B cell (primary cell): ENCODE measurements at regions of chrX and their contacts with region 1.

Region 1: GRCh38 chrX:153927922-153928760 is 2.1 kb upstream of the ARHGAP4 start:
- DNase-seq: peak; percentile 95
- ATAC-seq: peak; percentile 62
- H3K4me3 ChIP-seq: peak overlapping the region; percentile 73 to 88 (median 78)
- H3K4me3 Mint-ChIP-seq: peak overlapping the region; percentile 92
- H3K27ac ChIP-seq: peak overlapping the region; percentile 96 to 98
- H3K27ac Mint-ChIP-seq: peak overlapping the region; percentile 98
- H3K4me1 ChIP-seq: peaks cover 41 to 45% of the 10 kb centered on the region in 2 donors
- H3K4me1 Mint-ChIP-seq: peaks cover 35% of the 10 kb centered on the region
- H3K27me3 ChIP-seq: no peaks in the 10 kb centered on the region
- H3K27me3 Mint-ChIP-seq: no peaks in the 10 kb centered on the region
- CTCF ChIP-seq: no peak

Region 2: DNA sequence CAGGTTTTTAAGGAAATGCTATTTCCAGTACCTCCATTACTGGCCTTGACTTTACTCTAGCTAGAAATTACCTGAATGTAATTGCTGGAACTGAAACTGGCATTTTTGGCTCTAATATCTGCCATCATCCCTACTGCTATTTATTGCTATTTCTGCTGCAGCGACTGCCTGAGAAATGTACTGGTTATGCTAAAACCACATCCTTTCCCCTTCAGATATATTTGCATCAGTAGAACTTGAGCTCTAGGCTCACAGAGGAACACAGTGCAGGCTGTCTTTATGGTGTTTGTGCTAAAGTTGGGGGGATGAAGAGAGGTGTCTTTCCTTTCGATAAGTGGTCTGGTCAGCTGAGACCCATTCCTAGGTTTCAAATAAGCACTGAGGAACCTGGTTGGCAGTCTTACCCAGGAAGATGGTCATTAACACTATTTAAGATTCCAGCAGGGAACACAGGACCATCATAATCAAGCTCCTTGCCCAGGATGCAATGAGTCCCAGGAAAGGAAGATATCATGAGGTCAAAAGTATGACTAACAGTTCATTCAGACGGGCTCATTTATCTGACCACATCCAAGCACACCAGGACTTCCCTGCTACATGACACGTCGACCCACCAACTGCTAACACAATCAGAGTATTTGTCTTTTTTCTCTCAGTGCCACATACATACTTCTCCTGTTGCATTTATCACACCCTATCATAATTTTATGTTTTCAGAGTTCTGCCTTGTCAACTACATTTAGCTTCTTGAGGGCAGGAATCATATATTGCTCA is 1614.4 kb before region 1 on chrX:
- CTCF ChIA-PET with region 1: no interaction called
- POLR2A ChIA-PET with region 1: no interaction called
- intact Hi-C with region 1: no loop called
- DNase-seq: no peak
- ATAC-seq: no peak
- H3K4me3 ChIP-seq: no peak overlapping the region
- H3K4me3 Mint-ChIP-seq: no peak overlapping the region
- H3K27ac ChIP-seq: no peak overlapping the region
- H3K27ac Mint-ChIP-seq: no peak overlapping the region
- H3K4me1 ChIP-seq: no peaks in the 10 kb centered on the region
- H3K4me1 Mint-ChIP-seq: no peaks in the 10 kb centered on the region
- H3K27me3 ChIP-seq: no peaks in the 10 kb centered on the region
- H3K27me3 Mint-ChIP-seq: no peaks in the 10 kb centered on the region
- CTCF ChIP-seq: no peak

Region 3: GRCh38 chrX:153693191-153694086 is 234.7 kb before region 1 on chrX:
- CTCF ChIA-PET with region 1: no interaction called
- POLR2A ChIA-PET with region 1: no interaction called
- intact Hi-C with region 1: no loop called
- DNase-seq: no peak
- ATAC-seq: no peak
- H3K4me3 ChIP-seq: no peak overlapping the region
- H3K4me3 Mint-ChIP-seq: no peak overlapping the region
- H3K27ac ChIP-seq: no peak overlapping the region
- H3K27ac Mint-ChIP-seq: no peak overlapping the region
- H3K4me1 ChIP-seq: no peaks in the 10 kb centered on the region
- H3K4me1 Mint-ChIP-seq: no peaks in the 10 kb centered on the region
- H3K27me3 ChIP-seq: peaks cover 0 to 11% (median 0%) of the 10 kb centered on the region in 4 experiments
- H3K27me3 Mint-ChIP-seq: no peaks in the 10 kb centered on the region
- CTCF ChIP-seq: no peak

Region 4: GRCh38 chrX:153724252-153725040 is 203.7 kb before region 1 on chrX and contains the starts of genes ABCD1 and BCAP31:
- CTCF ChIA-PET with region 1: no interaction called
- POLR2A ChIA-PET with region 1: interaction called, 6 read pairs
- intact Hi-C with region 1: loop called (anchors 1 kb)
- DNase-seq: peak; percentile 93
- ATAC-seq: peak; percentile 72
- H3K4me3 ChIP-seq: peak within 1 kb of the TSS in 4 of 5 experiments; percentile 58 to 74 (median 64)
- H3K4me3 Mint-ChIP-seq: peak within 1 kb of the TSS; percentile 88
- H3K27ac ChIP-seq: peak within 1 kb of the TSS; percentile 81 to 86
- H3K27ac Mint-ChIP-seq: peak within 1 kb of the TSS; percentile 92
- H3K4me1 ChIP-seq: peaks cover 37 to 42% of the 10 kb centered on the region in 2 donors
- H3K4me1 Mint-ChIP-seq: peaks cover 40% of the 10 kb centered on the region
- H3K27me3 ChIP-seq: no peaks in the 10 kb centered on the region
- H3K27me3 Mint-ChIP-seq: no peaks in the 10 kb centered on the region
- CTCF ChIP-seq: no peak
- total RNA-seq, gene ABCD1: 9.7 and 10.9 TPM in 2 replicates
- total RNA-seq, gene BCAP31: 112 and 117 TPM in 2 replicates

Region 5: GRCh38 chrX:153794018-153794896 is 133.9 kb before region 1 on chrX and contains the starts of genes IDH3G and SSR4:
- CTCF ChIA-PET with region 1: interaction called, 9 read pairs
- POLR2A ChIA-PET with region 1: interaction called, 11 read pairs
- intact Hi-C with region 1: loop called (anchors 1 kb)
- DNase-seq: peak; percentile 96
- ATAC-seq: peak; percentile 92
- H3K4me3 ChIP-seq: peak within 1 kb of the TSS; percentile 43 to 80 (median 80)
- H3K4me3 Mint-ChIP-seq: peak within 1 kb of the TSS; percentile 93
- H3K27ac ChIP-seq: peak within 1 kb of the TSS; percentile 87 to 90
- H3K27ac Mint-ChIP-seq: peak within 1 kb of the TSS; percentile 97
- H3K4me1 ChIP-seq: peaks cover 16 to 24% of the 10 kb centered on the region in 2 donors
- H3K4me1 Mint-ChIP-seq: peaks cover 30% of the 10 kb centered on the region
- H3K27me3 ChIP-seq: no peaks in the 10 kb centered on the region
- H3K27me3 Mint-ChIP-seq: no peaks in the 10 kb centered on the region
- CTCF ChIP-seq: no peak
- total RNA-seq, gene IDH3G: 58.5 and 62.8 TPM in 2 replicates
- total RNA-seq, gene SSR4: 119 and 134 TPM in 2 replicates

Region 6: GRCh38 chrX:153885968-153886903 is 41.9 kb before region 1 on chrX and contains the start of gene L1CAM:
- CTCF ChIA-PET with region 1: interaction called, 3 read pairs
- POLR2A ChIA-PET with region 1: interaction called, 3 read pairs
- intact Hi-C with region 1: loop called (anchors 5 kb)
- DNase-seq: peak; percentile 41
- ATAC-seq: peak; percentile 53
- H3K4me3 ChIP-seq: peak within 1 kb of the TSS in 4 of 5 experiments; percentile 23 to 47 (median 40)
- H3K4me3 Mint-ChIP-seq: peak within 1 kb of the TSS; percentile 75
- H3K27ac ChIP-seq: no peak within 1 kb of the TSS
- H3K27ac Mint-ChIP-seq: no peak within 1 kb of the TSS
- H3K4me1 ChIP-seq: peaks cover 40 to 44% of the 10 kb centered on the region in 2 donors
- H3K4me1 Mint-ChIP-seq: peaks cover 24% of the 10 kb centered on the region
- H3K27me3 ChIP-seq: peaks cover 0 to 28% (median 11%) of the 10 kb centered on the region in 4 experiments
- H3K27me3 Mint-ChIP-seq: peaks cover 6% of the 10 kb centered on the region
- CTCF ChIP-seq: no peak
- total RNA-seq, gene L1CAM: 19.9 and 22.2 TPM in 2 replicates

Region 7: GRCh38 chrX:153947009-153947769 is 19.0 kb after region 1 on chrX:
- CTCF ChIA-PET with region 1: interaction called, 325 read pairs
- POLR2A ChIA-PET with region 1: interaction called, 58 read pairs
- intact Hi-C with region 1: loop called (anchors 1 kb)
- DNase-seq: peak; percentile 83
- ATAC-seq: peak; percentile 88
- H3K4me3 ChIP-seq: no peak overlapping the region
- H3K4me3 Mint-ChIP-seq: no peak overlapping the region
- H3K27ac ChIP-seq: no peak overlapping the region
- H3K27ac Mint-ChIP-seq: peak overlapping the region; percentile 34
- H3K4me1 ChIP-seq: peaks cover 9 to 39% of the 10 kb centered on the region in 2 donors
- H3K4me1 Mint-ChIP-seq: peaks cover 15% of the 10 kb centered on the region
- H3K27me3 ChIP-seq: no peaks in the 10 kb centered on the region
- H3K27me3 Mint-ChIP-seq: no peaks in the 10 kb centered on the region
- CTCF ChIP-seq: peak; percentile 80

Region 8: GRCh38 chrX:154370882-154371770 is 443.0 kb after region 1 on chrX:
- CTCF ChIA-PET with region 1: no interaction called
- POLR2A ChIA-PET with region 1: no interaction called
- intact Hi-C with region 1: loop called (anchors 2 kb)
- DNase-seq: peak; percentile 94
- ATAC-seq: peak; percentile 63
- H3K4me3 ChIP-seq: peak overlapping the region; percentile 24 to 81 (median 75)
- H3K4me3 Mint-ChIP-seq: peak overlapping the region; percentile 85
- H3K27ac ChIP-seq: peak overlapping the region; percentile 60 to 86
- H3K27ac Mint-ChIP-seq: peak overlapping the region; percentile 88
- H3K4me1 ChIP-seq: peaks cover 32 to 56% of the 10 kb centered on the region in 2 donors
- H3K4me1 Mint-ChIP-seq: peaks cover 25% of the 10 kb centered on the region
- H3K27me3 ChIP-seq: no peaks in the 10 kb centered on the region
- H3K27me3 Mint-ChIP-seq: no peaks in the 10 kb centered on the region
- CTCF ChIP-seq: no peak